HepG2 (cell line): ENCODE measurements at regions of chr9 and their contacts with region 1.

Region 1: DNA sequence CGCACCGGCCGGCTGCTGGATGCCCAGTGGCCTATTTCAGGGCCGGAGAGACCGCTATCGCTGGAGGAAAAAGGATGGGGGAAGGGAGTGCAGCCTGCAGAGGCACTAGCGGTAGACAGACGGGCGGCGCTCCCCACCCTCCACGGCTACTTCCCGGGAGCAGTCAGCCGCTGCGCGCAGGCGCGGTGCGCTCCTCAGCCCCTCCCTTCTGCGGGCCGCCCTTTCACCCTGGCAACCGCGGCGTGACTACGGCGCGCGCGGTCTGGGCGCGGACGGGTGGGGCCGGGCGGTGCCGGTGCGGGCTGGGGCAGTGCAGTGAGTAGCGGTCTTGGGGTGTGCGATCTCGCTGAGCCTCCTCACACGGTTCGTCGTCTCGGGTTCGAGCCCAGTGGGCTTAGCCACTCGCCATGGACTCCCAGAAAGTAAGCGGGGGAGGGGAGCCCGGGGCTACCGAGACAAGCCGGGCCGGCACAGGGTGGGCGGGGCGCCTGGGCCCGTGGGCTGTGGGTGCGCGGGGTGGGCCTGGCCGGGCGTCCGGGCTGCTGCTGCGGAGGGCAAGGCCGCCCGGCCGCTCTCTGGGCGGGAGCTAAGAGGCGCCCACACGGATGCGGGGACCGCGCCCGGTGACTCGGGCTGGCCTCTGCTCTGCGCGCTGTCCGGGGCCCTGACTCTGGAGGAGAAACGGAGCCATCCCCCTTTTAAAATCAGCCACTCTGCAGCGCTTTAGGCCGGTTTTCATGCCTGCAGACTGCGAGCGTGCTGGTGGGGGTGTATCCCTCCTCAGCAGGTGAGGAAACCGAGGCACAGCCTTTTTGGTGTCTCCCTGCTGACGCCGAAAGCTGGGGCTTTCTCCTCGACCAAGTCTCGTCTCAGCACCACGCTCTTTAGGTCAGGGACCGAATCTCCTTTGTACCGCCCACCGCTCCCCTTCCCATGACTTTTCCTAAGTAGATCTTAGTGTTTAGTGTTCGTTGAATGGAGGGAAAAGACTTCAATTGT is at the start of gene FSD1L:
- DNase-seq: peak; percentile 84
- ATAC-seq: peak; percentile 95
- H3K4me3 ChIP-seq: peak within 1 kb of the TSS; percentile 83 to 90 (median 89)
- H3K27ac ChIP-seq: peak within 1 kb of the TSS; percentile 74
- H3K4me1 ChIP-seq: peaks cover 75% of the 10 kb centered on the region
- H3K27me3 ChIP-seq: no peaks in the 10 kb centered on the region; a peak in 1 of 5 replicates
- CTCF ChIP-seq: peak; percentile 80
- EP300 ChIP-seq: no peak
- POLR2A ChIP-seq: peak in 1 of 2 experiments; percentile 79; a peak in 3 of 4 replicates
- RAD21 ChIP-seq: peak; percentile 74
- total RNA-seq, gene FSD1L: 2.8 and 5.1 TPM in 2 replicates

Region 2: GRCh38 chr9:105290398-105290797 is 157.7 kb before region 1 on chr9:
- CTCF ChIA-PET with region 1: no interaction called
- POLR2A ChIA-PET with region 1: no interaction called
- in situ Hi-C with region 1: no loop called
- intact Hi-C with region 1: no loop called
- DNase-seq: no peak
- ATAC-seq: no peak
- H3K4me3 ChIP-seq: peak overlapping the region in 1 of 3 experiments; percentile 24; a peak in 1 of 6 replicates
- H3K27ac ChIP-seq: peak overlapping the region; percentile 76
- H3K4me1 ChIP-seq: peaks cover 72% of the 10 kb centered on the region
- H3K27me3 ChIP-seq: no peaks in the 10 kb centered on the region
- CTCF ChIP-seq: no peak
- EP300 ChIP-seq: no peak
- POLR2A ChIP-seq: no peak
- RAD21 ChIP-seq: no peak

Region 3: GRCh38 chr9:105385381-105385985 is 62.6 kb before region 1 on chr9:
- CTCF ChIA-PET with region 1: no interaction called
- POLR2A ChIA-PET with region 1: no interaction called
- in situ Hi-C with region 1: no loop called
- intact Hi-C with region 1: no loop called
- DNase-seq: no peak
- ATAC-seq: no peak
- H3K4me3 ChIP-seq: no peak overlapping the region
- H3K27ac ChIP-seq: no peak overlapping the region
- H3K4me1 ChIP-seq: no peaks in the 10 kb centered on the region
- H3K27me3 ChIP-seq: no peaks in the 10 kb centered on the region
- CTCF ChIP-seq: no peak
- EP300 ChIP-seq: no peak
- POLR2A ChIP-seq: no peak
- RAD21 ChIP-seq: no peak

Region 4: GRCh38 chr9:105432247-105432842 is 15.8 kb before region 1 on chr9:
- CTCF ChIA-PET with region 1: no interaction called
- POLR2A ChIA-PET with region 1: interaction called, 13 read pairs
- in situ Hi-C with region 1: no loop called
- intact Hi-C with region 1: loop called (anchors 2 kb)
- DNase-seq: peak; percentile 70
- ATAC-seq: peak; percentile 91
- H3K4me3 ChIP-seq: no peak overlapping the region; a peak in 1 of 6 replicates
- H3K27ac ChIP-seq: peak overlapping the region; percentile 72
- H3K4me1 ChIP-seq: peaks cover 48% of the 10 kb centered on the region
- H3K27me3 ChIP-seq: no peaks in the 10 kb centered on the region
- CTCF ChIP-seq: no peak
- EP300 ChIP-seq: peak in 1 of 2 experiments; percentile 88; a peak in 2 of 4 replicates
- POLR2A ChIP-seq: no peak
- RAD21 ChIP-seq: no peak

Region 5: GRCh38 chr9:105475302-105475701 is 27.2 kb after region 1 on chr9:
- CTCF ChIA-PET with region 1: no interaction called
- POLR2A ChIA-PET with region 1: no interaction called
- in situ Hi-C with region 1: no loop called
- intact Hi-C with region 1: loop called (anchors 2 kb)
- DNase-seq: peak; percentile 39
- ATAC-seq: peak; percentile 88
- H3K4me3 ChIP-seq: no peak overlapping the region
- H3K27ac ChIP-seq: no peak overlapping the region
- H3K4me1 ChIP-seq: 0 out of 2 replicates have a peak, but pooled peaks cover 5% of the 10 kb centered on the region
- H3K27me3 ChIP-seq: no peaks in the 10 kb centered on the region
- CTCF ChIP-seq: peak; percentile 47
- EP300 ChIP-seq: no peak
- POLR2A ChIP-seq: no peak
- RAD21 ChIP-seq: no peak

Region 6: DNA sequence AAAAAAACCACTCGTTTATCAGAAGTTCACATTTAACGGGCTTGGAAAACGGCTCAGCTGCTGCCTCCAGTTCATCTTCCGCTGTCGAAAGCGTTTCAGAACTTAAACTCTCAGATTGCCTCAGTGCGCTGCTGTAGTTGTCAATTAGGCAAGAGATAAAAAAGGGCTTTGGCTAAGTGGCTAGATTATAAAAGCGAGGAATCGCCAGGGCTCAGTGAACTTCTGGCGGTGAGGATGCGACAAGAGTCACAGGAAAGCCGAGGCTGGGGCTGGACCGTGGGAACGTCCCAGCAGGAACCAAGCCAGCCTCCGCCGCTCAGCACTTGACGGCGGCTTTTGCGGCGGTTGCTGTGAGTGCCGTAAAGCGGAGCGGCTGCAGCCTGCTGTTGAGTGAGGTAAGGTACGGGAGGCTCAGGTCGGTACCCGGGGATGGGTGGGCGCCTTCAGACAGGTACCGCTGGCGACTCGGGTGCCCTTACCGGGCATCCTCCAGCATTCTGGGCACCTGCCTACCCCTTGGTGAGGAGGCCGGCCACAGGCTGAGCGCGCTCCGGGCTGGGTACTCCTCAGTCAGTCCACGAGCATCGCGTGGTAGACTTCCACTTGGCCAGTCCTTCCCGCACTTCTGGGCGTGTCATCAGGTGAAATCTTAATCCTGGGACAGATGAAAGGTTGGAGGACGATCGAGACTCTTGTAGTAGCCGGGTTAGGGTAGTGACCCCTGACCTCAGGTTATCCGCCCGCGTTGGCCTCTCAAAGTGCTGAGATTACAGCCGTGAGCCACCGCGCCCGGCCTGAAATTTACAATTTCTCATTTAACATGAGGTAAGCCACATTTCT is 109.9 kb after region 1 on chr9 and contains the start of gene FKTN:
- CTCF ChIA-PET with region 1: no interaction called
- POLR2A ChIA-PET with region 1: no interaction called
- in situ Hi-C with region 1: no loop called
- intact Hi-C with region 1: loop called (anchors 5 kb)
- DNase-seq: peak; percentile 73
- ATAC-seq: peak; percentile 95
- H3K4me3 ChIP-seq: peak within 1 kb of the TSS; percentile 76 to 93 (median 90)
- H3K27ac ChIP-seq: peak within 1 kb of the TSS; percentile 35
- H3K4me1 ChIP-seq: peaks cover 12% of the 10 kb centered on the region
- H3K27me3 ChIP-seq: no peaks in the 10 kb centered on the region; a peak in 1 of 5 replicates
- CTCF ChIP-seq: no peak
- EP300 ChIP-seq: no peak
- POLR2A ChIP-seq: peak in 1 of 2 experiments; percentile 84; a peak in 2 of 4 replicates
- RAD21 ChIP-seq: peak; percentile 9; the same call in 1 of the 2 replicates
- total RNA-seq, gene FKTN: 13.5 and 15.2 TPM in 2 replicates

Region 7: GRCh38 chr9:105694190-105694847 is 246.2 kb after region 1 on chr9 and contains the start of gene TMEM38B:
- CTCF ChIA-PET with region 1: no interaction called
- POLR2A ChIA-PET with region 1: no interaction called
- in situ Hi-C with region 1: no loop called
- intact Hi-C with region 1: loop called (anchors 10 kb)
- DNase-seq: peak; percentile 50
- ATAC-seq: peak; percentile 93
- H3K4me3 ChIP-seq: peak within 1 kb of the TSS; percentile 77 to 92 (median 82)
- H3K27ac ChIP-seq: peak within 1 kb of the TSS; percentile 43
- H3K4me1 ChIP-seq: peaks cover 31% of the 10 kb centered on the region
- H3K27me3 ChIP-seq: no peaks in the 10 kb centered on the region; a peak in 1 of 5 replicates
- CTCF ChIP-seq: no peak
- EP300 ChIP-seq: no peak
- POLR2A ChIP-seq: peak; percentile 55 to 74; a peak in 3 of 4 replicates
- RAD21 ChIP-seq: no peak
- total RNA-seq, gene TMEM38B: 26.0 and 32.4 TPM in 2 replicates